Mammary epithelial cell (primary cell): ENCODE measurements at regions of chr16 and their contacts with region 1.

Region 1: GRCh38 chr16:89300311-89300975 is 82.9 kb downstream of the ZNF778 start:
- DNase-seq: no peak
- H3K4me3 ChIP-seq: no peak overlapping the region
- H3K27ac ChIP-seq: no peak overlapping the region
- H3K4me1 ChIP-seq: peaks cover 17% of the 10 kb centered on the region
- H3K27me3 ChIP-seq: no peaks in the 10 kb centered on the region
- CTCF ChIP-seq: no peak

Region 2: DNA sequence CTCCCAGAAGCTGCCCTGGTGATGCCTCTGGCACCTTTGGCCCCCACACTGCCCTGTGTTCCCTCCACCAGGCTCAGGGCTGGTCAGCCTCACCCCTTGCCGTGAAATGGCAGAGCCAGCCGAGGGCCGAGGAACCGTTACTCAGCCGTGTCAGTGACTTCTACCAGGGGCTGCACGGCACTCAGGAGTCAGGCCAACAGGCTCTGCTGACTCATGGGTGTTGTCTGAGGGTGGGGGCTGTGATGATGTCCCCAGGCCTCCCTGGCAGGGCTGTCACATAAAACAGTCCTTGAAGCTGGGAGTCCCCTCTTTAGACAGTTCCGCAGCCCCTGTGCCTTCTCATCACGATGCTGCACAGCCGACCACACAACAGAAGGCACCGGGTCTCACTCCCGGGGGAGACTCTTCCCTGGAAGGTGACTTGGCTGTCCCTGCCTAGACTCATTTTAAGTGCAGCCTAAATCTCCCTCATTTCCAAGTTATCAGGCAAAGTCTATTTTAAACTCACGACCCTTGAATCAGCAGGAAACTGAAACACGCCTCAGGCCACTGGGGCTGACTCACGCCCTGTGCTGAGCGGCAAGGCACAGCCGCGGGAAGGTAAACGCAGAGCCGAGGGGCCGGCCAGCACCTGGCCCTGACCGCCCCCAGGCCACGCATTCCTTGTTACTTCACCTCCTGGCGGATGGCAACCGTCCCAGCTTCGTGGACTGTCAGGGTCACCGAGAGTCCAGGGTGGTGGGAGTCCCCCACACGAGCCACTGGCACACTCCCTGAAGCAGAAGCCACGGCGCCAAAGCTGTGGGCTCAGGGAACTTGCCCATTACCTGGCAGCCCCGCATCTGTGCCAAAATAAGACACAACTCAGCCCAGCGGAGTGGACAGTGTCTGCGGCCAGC is 19.7 kb after region 1 on chr16:
- CTCF ChIA-PET with region 1: no interaction called
- dilution Hi-C with region 1: no loop called
- in situ Hi-C with region 1: no loop called
- intact Hi-C with region 1: loop called (anchors 2 kb)
- DNase-seq: peak; percentile 91
- H3K4me3 ChIP-seq: peak overlapping the region in 2 of 3 experiments; percentile 6 to 37
- H3K27ac ChIP-seq: peak overlapping the region; percentile 69
- H3K4me1 ChIP-seq: peaks cover 90% of the 10 kb centered on the region
- H3K27me3 ChIP-seq: no peaks in the 10 kb centered on the region
- CTCF ChIP-seq: no peak